PC-3 (cell line): ENCODE measurements at regions of chr7 and their contacts with region 1.

Region 1: GRCh38 chr7:21076054-21076453 is 289.4 kb upstream of the SP8 start:
- DNase-seq: no peak
- ATAC-seq: no peak
- H3K4me3 ChIP-seq: no peak overlapping the region
- H3K27ac ChIP-seq: no peak overlapping the region
- H3K4me1 ChIP-seq: peaks cover 39% of the 10 kb centered on the region
- H3K27me3 ChIP-seq: no peaks in the 10 kb centered on the region
- CTCF ChIP-seq: no peak

Region 2: GRCh38 chr7:20784388-20785210 is 291.5 kb before region 1 on chr7:
- CTCF ChIA-PET with region 1: no interaction called
- POLR2A ChIA-PET with region 1: interaction called, 24 read pairs
- intact Hi-C with region 1: no loop called
- DNase-seq: peak; percentile 69
- ATAC-seq: peak; percentile 65
- H3K4me3 ChIP-seq: peak overlapping the region; percentile 55; the same call in 1 of the 2 replicates
- H3K27ac ChIP-seq: no peak overlapping the region
- H3K4me1 ChIP-seq: no peaks in the 10 kb centered on the region
- H3K27me3 ChIP-seq: peaks cover 98% of the 10 kb centered on the region
- CTCF ChIP-seq: peak; percentile 48

Region 3: DNA sequence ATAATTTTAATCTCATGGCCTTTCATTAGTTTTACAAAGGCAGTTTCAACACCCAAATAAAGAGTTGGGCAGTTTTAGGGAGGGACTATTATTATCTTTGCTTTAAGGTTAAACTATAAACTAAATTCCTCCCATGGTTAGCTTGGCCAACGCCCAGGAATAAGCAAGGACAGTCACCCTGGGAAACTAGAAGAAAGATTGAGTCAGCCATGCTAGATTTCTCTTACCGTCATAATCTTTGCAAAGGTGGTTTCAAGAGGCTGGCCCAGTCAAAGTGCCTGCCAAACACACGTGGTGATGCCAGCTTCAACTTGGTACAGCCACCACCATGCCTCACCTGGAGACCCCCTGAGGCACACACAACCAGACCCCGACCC is 28.1 kb after region 1 on chr7:
- CTCF ChIA-PET with region 1: no interaction called
- POLR2A ChIA-PET with region 1: no interaction called
- intact Hi-C with region 1: loop called (anchors 1 kb)
- DNase-seq: peak; percentile 30
- ATAC-seq: no peak
- H3K4me3 ChIP-seq: no peak overlapping the region
- H3K27ac ChIP-seq: no peak overlapping the region
- H3K4me1 ChIP-seq: peaks cover 9% of the 10 kb centered on the region; the same call in 1 of the 2 replicates
- H3K27me3 ChIP-seq: no peaks in the 10 kb centered on the region
- CTCF ChIP-seq: no peak

Region 4: GRCh38 chr7:21215307-21215706 is 139.3 kb after region 1 on chr7:
- CTCF ChIA-PET with region 1: no interaction called
- POLR2A ChIA-PET with region 1: no interaction called
- intact Hi-C with region 1: no loop called
- DNase-seq: no peak
- ATAC-seq: no peak
- H3K4me3 ChIP-seq: no peak overlapping the region
- H3K27ac ChIP-seq: no peak overlapping the region
- H3K4me1 ChIP-seq: no peaks in the 10 kb centered on the region
- H3K27me3 ChIP-seq: peaks cover 23% of the 10 kb centered on the region
- CTCF ChIP-seq: no peak